ENCODE measurements at regions of chr20 and their contacts with region 1.

Region 1: DNA sequence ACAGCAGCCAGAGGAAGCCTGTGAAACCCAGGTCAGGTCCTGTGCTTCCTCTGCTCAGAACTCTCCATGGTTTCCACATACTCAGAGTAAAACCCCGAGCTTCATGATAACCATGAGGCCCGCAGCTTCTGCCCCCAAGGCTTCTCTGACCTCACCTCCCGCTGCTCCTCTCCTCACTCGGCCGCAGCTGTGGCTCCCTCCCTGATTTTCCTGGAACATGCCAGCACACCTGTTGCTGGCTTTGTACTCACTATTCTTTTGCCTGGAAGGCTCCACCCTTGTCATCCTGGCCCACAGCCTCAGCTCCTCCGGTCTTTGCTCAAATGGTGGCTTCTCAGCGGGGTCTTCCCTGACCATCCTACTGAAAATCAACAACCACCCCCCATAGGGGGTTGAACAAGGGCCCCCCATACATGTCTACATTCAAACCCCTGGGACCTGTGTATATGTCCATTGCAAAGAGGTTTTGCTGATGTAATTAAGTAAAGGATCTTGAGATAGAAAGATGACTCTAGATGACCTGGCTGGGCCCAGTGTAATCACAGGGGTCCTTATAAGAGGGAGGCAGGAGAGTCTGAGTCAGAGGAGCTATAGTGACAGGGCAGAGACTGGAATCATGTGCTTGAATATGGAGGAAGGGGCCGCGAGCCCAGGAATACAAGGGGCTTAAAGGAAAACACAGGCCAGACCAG is 341.6 kb downstream of the PREX1 start:
- DNase-seq: no peak
- H3K4me3 ChIP-seq: no peak overlapping the region
- H3K27ac ChIP-seq: no peak overlapping the region
- H3K4me1 ChIP-seq: no peaks in the 10 kb centered on the region; a peak in 2 of 7 replicates
- H3K27me3 ChIP-seq: no peaks in the 10 kb centered on the region; a peak in 1 of 7 replicates
- CTCF ChIP-seq: no peak
- EP300 ChIP-seq: no peak
- POLR2A ChIP-seq: no peak
- RAD21 ChIP-seq: no peak

Region 2: GRCh38 chr20:48308882-48309281 is 177.3 kb before region 1 on chr20:
- CTCF ChIA-PET with region 1: no interaction called
- POLR2A ChIA-PET with region 1: no interaction called
- DNase-seq: no peak
- H3K4me3 ChIP-seq: no peak overlapping the region
- H3K27ac ChIP-seq: no peak overlapping the region
- H3K4me1 ChIP-seq: peaks cover 0 to 5% (median 1%) of the 10 kb centered on the region in 4 experiments; a peak in 2 of 7 replicates
- H3K27me3 ChIP-seq: no peaks in the 10 kb centered on the region; a peak in 1 of 7 replicates
- CTCF ChIP-seq: no peak
- EP300 ChIP-seq: no peak
- POLR2A ChIP-seq: no peak
- RAD21 ChIP-seq: no peak

Region 3: GRCh38 chr20:48471759-48472533 is 14.3 kb before region 1 on chr20:
- CTCF ChIA-PET with region 1: interaction called, 11 read pairs
- POLR2A ChIA-PET with region 1: no interaction called
- DNase-seq: no peak
- H3K4me3 ChIP-seq: no peak overlapping the region
- H3K27ac ChIP-seq: no peak overlapping the region
- H3K4me1 ChIP-seq: no peaks in the 10 kb centered on the region
- H3K27me3 ChIP-seq: no peaks in the 10 kb centered on the region; a peak in 1 of 7 replicates
- CTCF ChIP-seq: no peak
- EP300 ChIP-seq: no peak
- POLR2A ChIP-seq: no peak
- RAD21 ChIP-seq: no peak